ENCODE measurements at regions of chr1 and their contacts with region 1.

Region 1: GRCh38 chr1:187999973-188000372 is 1171.2 kb downstream of the PLA2G4A start:
- DNase-seq: no peak
- H3K4me3 Mint-ChIP-seq: no peak overlapping the region
- H3K27ac Mint-ChIP-seq: no peak overlapping the region
- H3K4me1 Mint-ChIP-seq: no peaks in the 10 kb centered on the region
- H3K27me3 Mint-ChIP-seq: no peaks in the 10 kb centered on the region
- CTCF ChIP-seq: no peak

Region 2: GRCh38 chr1:187721216-187721615 is 278.8 kb before region 1 on chr1:
- CTCF ChIA-PET with region 1: no interaction called
- intact Hi-C with region 1: no loop called
- DNase-seq: no peak
- H3K4me3 Mint-ChIP-seq: no peak overlapping the region
- H3K27ac Mint-ChIP-seq: no peak overlapping the region
- H3K4me1 Mint-ChIP-seq: peaks cover 12% of the 10 kb centered on the region
- H3K27me3 Mint-ChIP-seq: no peaks in the 10 kb centered on the region
- CTCF ChIP-seq: no peak

Region 3: GRCh38 chr1:187931776-187932175 is 68.2 kb before region 1 on chr1:
- CTCF ChIA-PET with region 1: no interaction called
- intact Hi-C with region 1: no loop called
- DNase-seq: no peak
- H3K4me3 Mint-ChIP-seq: no peak overlapping the region
- H3K27ac Mint-ChIP-seq: no peak overlapping the region
- H3K4me1 Mint-ChIP-seq: peaks cover 10% of the 10 kb centered on the region
- H3K27me3 Mint-ChIP-seq: no peaks in the 10 kb centered on the region
- CTCF ChIP-seq: no peak

Region 4: DNA sequence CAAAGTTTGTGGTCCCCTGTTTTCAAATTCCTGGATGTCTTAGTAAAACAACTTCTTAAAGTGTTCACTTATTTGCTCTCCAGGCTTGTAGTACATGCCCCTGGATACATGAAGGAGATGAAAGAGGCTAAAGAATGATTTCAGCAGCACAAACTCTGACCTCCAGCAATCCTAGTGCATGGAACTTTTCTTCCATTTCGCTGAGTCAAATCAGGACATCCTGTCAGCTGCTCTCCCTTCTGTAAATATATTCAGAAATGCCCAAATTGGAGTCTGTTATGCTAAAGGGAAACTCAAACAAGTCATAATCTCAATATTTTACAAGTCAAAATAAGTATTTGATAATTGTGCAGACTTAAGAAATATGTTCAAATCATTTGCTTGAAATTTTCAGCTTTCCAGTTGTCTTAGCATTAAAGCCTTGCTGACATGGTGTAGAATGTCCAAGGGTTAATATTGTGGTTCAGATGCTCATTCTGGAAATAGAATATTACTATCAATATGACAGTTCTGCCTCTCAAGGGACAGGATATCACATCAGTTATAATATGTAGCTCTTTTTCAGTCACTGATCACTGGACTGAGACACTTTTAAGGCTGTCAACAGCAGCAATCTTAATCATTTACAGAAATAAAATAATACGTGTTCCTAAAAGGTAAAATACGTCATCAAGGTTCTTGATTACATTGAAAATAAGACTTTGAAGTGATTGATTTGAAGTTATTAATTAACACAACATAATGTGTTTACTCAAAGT is 13.9 kb before region 1 on chr1:
- CTCF ChIA-PET with region 1: no interaction called
- intact Hi-C with region 1: no loop called
- DNase-seq: no peak
- H3K4me3 Mint-ChIP-seq: no peak overlapping the region
- H3K27ac Mint-ChIP-seq: peak overlapping the region; percentile 9
- H3K4me1 Mint-ChIP-seq: peaks cover 13% of the 10 kb centered on the region
- H3K27me3 Mint-ChIP-seq: no peaks in the 10 kb centered on the region
- CTCF ChIP-seq: no peak

Region 5: GRCh38 chr1:188218289-188218688 is 218.3 kb after region 1 on chr1:
- CTCF ChIA-PET with region 1: no interaction called
- intact Hi-C with region 1: loop called (anchors 10 kb)
- DNase-seq: no peak
- H3K4me3 Mint-ChIP-seq: no peak overlapping the region
- H3K27ac Mint-ChIP-seq: no peak overlapping the region
- H3K4me1 Mint-ChIP-seq: no peaks in the 10 kb centered on the region
- H3K27me3 Mint-ChIP-seq: no peaks in the 10 kb centered on the region
- CTCF ChIP-seq: no peak

Measured in Calu3 (cell line).